HepG2 (cell line): ENCODE measurements at regions of chr17 and their contacts with region 1.

Region 1: GRCh38 chr17:43546319-43547188 is at the start of gene ETV4:
- DNase-seq: peak; percentile 96
- ATAC-seq: peak; percentile 68
- H3K4me3 ChIP-seq: peak within 1 kb of the TSS; percentile 84 to 89 (median 87)
- H3K27ac ChIP-seq: peak within 1 kb of the TSS; percentile 100
- H3K4me1 ChIP-seq: peaks cover 74% of the 10 kb centered on the region
- H3K27me3 ChIP-seq: peaks cover 0 to 7% of the 10 kb centered on the region in 2 experiments; a peak in 1 of 5 replicates
- CTCF ChIP-seq: no peak
- EP300 ChIP-seq: peak in 1 of 2 experiments; percentile 16; a peak in 1 of 4 replicates
- POLR2A ChIP-seq: peak; percentile 56 to 67; a peak in 2 of 4 replicates
- RAD21 ChIP-seq: no peak; the same call in 1 of the 2 replicates
- total RNA-seq, gene ETV4: 126 and 128 TPM in 2 replicates

Region 2: DNA sequence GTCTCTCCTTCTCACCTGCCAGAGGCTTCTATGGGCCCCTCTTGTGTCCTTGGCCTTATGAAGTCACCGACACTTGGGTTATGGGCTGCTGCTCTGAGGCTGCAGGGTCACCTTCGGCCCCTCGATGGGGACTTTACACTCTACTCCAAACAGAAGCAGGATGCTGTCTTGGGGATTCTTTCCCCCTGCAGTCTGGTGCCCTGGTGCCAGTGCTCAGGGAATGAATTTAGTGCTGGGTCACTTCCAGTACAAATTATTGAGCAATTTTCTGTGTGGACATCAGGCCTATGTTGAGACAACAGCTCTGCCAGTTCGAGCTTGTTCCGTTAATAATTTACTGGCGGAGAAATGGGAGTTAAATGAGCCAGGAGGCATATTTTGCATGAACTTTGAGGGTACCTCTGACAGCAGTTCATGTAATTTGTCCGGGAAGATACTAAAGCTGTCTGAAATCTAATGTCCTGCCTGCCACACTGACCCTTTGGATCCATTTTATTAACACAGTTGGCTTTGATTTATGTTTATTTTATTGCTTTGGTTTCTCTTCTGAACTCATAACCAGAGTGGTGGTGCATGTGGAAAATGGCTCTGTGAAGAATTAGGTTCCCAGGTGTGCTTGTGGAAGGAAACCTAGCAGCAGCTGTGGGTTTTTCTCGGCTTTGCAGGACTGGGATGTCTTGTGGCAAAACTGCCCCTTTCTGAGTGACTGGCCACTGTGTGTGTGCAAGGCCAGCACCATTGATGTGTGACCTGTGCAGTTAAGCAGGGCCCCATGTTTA is 96.9 kb before region 1 on chr17:
- CTCF ChIA-PET with region 1: no interaction called
- POLR2A ChIA-PET with region 1: no interaction called
- in situ Hi-C with region 1: no loop called
- intact Hi-C with region 1: no loop called
- DNase-seq: peak; percentile 97
- ATAC-seq: peak; percentile 96
- H3K4me3 ChIP-seq: peak overlapping the region; percentile 15 to 52 (median 32); a peak in 5 of 6 replicates
- H3K27ac ChIP-seq: peak overlapping the region; percentile 89
- H3K4me1 ChIP-seq: peaks cover 52% of the 10 kb centered on the region
- H3K27me3 ChIP-seq: no peaks in the 10 kb centered on the region
- CTCF ChIP-seq: peak; percentile 1; the same call in 1 of the 2 replicates
- EP300 ChIP-seq: peak; percentile 82 to 91
- POLR2A ChIP-seq: no peak
- RAD21 ChIP-seq: no peak

Region 3: GRCh38 chr17:43517615-43518386 is 28.8 kb before region 1 on chr17:
- CTCF ChIA-PET with region 1: interaction called, 5 read pairs
- POLR2A ChIA-PET with region 1: interaction called, 1,546 read pairs
- in situ Hi-C with region 1: no loop called
- intact Hi-C with region 1: loop called (anchors 1 kb)
- DNase-seq: no peak
- ATAC-seq: no peak
- H3K4me3 ChIP-seq: no peak overlapping the region
- H3K27ac ChIP-seq: no peak overlapping the region
- H3K4me1 ChIP-seq: peaks cover 27% of the 10 kb centered on the region
- H3K27me3 ChIP-seq: no peaks in the 10 kb centered on the region
- CTCF ChIP-seq: no peak
- EP300 ChIP-seq: no peak
- POLR2A ChIP-seq: no peak
- RAD21 ChIP-seq: no peak

Region 4: GRCh38 chr17:43524945-43525575 is 21.5 kb before region 1 on chr17:
- CTCF ChIA-PET with region 1: interaction called, 5 read pairs
- POLR2A ChIA-PET with region 1: interaction called, 1,546 read pairs
- in situ Hi-C with region 1: no loop called
- intact Hi-C with region 1: loop called (anchors 1 kb)
- DNase-seq: no peak
- ATAC-seq: peak; percentile 1
- H3K4me3 ChIP-seq: no peak overlapping the region
- H3K27ac ChIP-seq: peak overlapping the region; percentile 96
- H3K4me1 ChIP-seq: peaks cover 68% of the 10 kb centered on the region
- H3K27me3 ChIP-seq: no peaks in the 10 kb centered on the region
- CTCF ChIP-seq: no peak
- EP300 ChIP-seq: no peak
- POLR2A ChIP-seq: no peak
- RAD21 ChIP-seq: no peak

Region 5: DNA sequence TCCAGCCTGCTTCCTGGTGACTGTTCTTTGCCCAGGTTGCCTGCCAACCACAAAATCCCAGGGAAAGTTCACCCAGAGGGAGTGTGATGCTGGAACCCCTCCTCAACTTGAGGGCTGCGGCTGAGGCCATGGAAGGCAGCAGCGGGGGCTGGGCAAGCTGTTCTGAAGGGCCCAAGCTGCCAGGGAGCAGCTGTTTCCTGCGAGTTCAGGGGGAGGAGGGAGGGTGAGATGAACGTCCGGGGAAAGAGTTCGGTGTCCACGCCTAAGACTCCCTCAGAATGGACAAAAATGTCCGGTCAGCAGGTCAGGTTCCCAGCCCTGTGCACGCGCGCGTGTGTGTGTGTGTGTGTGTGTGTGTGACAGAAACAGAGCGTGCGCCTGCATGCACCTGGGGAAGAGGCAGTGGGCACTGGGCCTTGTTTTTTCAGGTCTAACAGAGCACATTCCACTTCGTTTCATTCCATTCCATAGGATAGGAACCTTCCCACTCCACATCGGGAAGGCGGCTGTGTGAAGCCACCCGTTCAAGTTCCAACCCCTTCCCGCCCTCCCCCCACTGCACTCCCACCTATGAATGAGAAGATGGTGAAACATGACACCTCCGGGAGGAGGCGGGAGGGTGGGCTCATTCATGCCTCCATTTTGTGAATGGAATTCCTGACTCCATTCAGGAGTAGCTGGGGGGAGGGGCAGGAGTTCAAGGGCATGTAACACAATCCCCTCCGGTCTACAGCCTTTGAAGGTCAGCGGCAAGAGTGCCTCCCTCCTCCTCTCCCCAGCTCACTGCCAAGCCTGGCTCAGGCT is 16.1 kb before region 1 on chr17:
- CTCF ChIA-PET with region 1: no interaction called
- POLR2A ChIA-PET with region 1: interaction called, 1,546 read pairs
- in situ Hi-C with region 1: no loop called
- intact Hi-C with region 1: loop called (anchors 1 kb)
- DNase-seq: peak; percentile 100
- ATAC-seq: peak; percentile 74
- H3K4me3 ChIP-seq: peak overlapping the region in 2 of 3 experiments; percentile 26 to 58; a peak in 4 of 6 replicates
- H3K27ac ChIP-seq: peak overlapping the region; percentile 96
- H3K4me1 ChIP-seq: peaks cover 97% of the 10 kb centered on the region
- H3K27me3 ChIP-seq: no peaks in the 10 kb centered on the region
- CTCF ChIP-seq: peak; percentile 31; the same call in 1 of the 2 replicates
- EP300 ChIP-seq: peak; percentile 97 to 98
- POLR2A ChIP-seq: peak; percentile 82 to 93
- RAD21 ChIP-seq: peak; percentile 45

Region 6: GRCh38 chr17:43562679-43563599 is 16.4 kb after region 1 on chr17:
- CTCF ChIA-PET with region 1: no interaction called
- POLR2A ChIA-PET with region 1: interaction called, 1,546 read pairs
- in situ Hi-C with region 1: no loop called
- intact Hi-C with region 1: loop called (anchors 2 kb)
- DNase-seq: peak; percentile 56
- ATAC-seq: peak; percentile 53
- H3K4me3 ChIP-seq: peak overlapping the region in 1 of 3 experiments; percentile 23; a peak in 2 of 6 replicates
- H3K27ac ChIP-seq: peak overlapping the region; percentile 18
- H3K4me1 ChIP-seq: peaks cover 73% of the 10 kb centered on the region
- H3K27me3 ChIP-seq: no peaks in the 10 kb centered on the region
- CTCF ChIP-seq: no peak
- EP300 ChIP-seq: peak in 1 of 2 experiments; percentile 61; a peak in 1 of 4 replicates
- POLR2A ChIP-seq: no peak
- RAD21 ChIP-seq: no peak

Region 7: GRCh38 chr17:43570518-43570928 is 24.0 kb after region 1 on chr17:
- CTCF ChIA-PET with region 1: no interaction called
- POLR2A ChIA-PET with region 1: interaction called, 72 read pairs
- in situ Hi-C with region 1: no loop called
- intact Hi-C with region 1: loop called (anchors 1 kb)
- DNase-seq: no peak
- ATAC-seq: no peak
- H3K4me3 ChIP-seq: no peak overlapping the region
- H3K27ac ChIP-seq: no peak overlapping the region
- H3K4me1 ChIP-seq: peaks cover 60% of the 10 kb centered on the region
- H3K27me3 ChIP-seq: no peaks in the 10 kb centered on the region
- CTCF ChIP-seq: no peak
- EP300 ChIP-seq: no peak
- POLR2A ChIP-seq: no peak
- RAD21 ChIP-seq: no peak

Region 8: GRCh38 chr17:43599835-43600234 is 53.3 kb after region 1 on chr17:
- CTCF ChIA-PET with region 1: no interaction called
- POLR2A ChIA-PET with region 1: no interaction called
- in situ Hi-C with region 1: no loop called
- intact Hi-C with region 1: no loop called
- DNase-seq: no peak
- ATAC-seq: no peak
- H3K4me3 ChIP-seq: no peak overlapping the region
- H3K27ac ChIP-seq: no peak overlapping the region
- H3K4me1 ChIP-seq: peaks cover 38% of the 10 kb centered on the region
- H3K27me3 ChIP-seq: no peaks in the 10 kb centered on the region
- CTCF ChIP-seq: no peak
- EP300 ChIP-seq: no peak
- POLR2A ChIP-seq: no peak
- RAD21 ChIP-seq: no peak

Region 9: DNA sequence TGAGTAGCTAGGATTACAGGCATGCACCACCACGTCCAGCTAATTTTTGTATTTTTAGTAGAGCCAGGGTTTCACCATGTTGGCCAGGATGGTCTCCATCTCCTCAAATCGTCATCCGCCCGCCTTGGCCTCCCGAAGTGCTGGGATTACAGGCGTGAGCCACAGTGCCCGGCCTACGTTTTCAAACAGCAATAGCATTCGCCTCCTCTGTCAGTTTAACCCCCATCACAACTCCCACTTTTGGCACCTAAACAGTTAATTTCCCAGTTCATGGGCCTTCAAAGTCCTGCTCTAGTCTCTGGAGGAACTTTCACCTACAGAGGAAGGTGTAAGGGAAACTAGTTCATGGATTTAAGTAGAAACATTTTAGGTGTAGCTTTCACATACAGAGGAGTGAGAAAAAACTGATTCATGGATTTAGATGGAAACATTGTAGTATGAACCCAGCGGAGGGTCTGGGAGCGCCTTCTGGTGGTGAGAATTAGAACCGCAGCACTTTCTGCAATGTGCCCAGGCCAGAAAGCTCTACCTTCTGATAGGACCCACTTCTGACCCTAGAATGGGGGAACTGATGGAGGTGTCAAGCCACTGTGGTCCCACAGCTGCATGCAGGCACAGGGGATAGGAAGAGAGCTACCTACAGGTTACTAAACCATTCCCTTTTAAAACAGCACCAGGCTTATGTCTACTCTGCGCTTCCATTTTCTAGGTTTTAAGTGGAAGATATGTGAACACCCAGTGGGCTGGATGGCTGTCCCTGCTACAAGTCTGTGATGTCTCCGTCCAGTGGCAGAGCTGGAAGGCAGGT is 127.2 kb after region 1 on chr17:
- CTCF ChIA-PET with region 1: no interaction called
- POLR2A ChIA-PET with region 1: interaction called, 10 read pairs
- in situ Hi-C with region 1: no loop called
- intact Hi-C with region 1: no loop called
- DNase-seq: peak; percentile 67
- ATAC-seq: peak; percentile 55
- H3K4me3 ChIP-seq: no peak overlapping the region
- H3K27ac ChIP-seq: no peak overlapping the region
- H3K4me1 ChIP-seq: peaks cover 100% of the 10 kb centered on the region
- H3K27me3 ChIP-seq: no peaks in the 10 kb centered on the region
- CTCF ChIP-seq: peak; percentile 94
- EP300 ChIP-seq: no peak
- POLR2A ChIP-seq: no peak
- RAD21 ChIP-seq: peak; percentile 97